ENCODE measurements at regions of chr1 and their contacts with region 1.

Region 1: DNA sequence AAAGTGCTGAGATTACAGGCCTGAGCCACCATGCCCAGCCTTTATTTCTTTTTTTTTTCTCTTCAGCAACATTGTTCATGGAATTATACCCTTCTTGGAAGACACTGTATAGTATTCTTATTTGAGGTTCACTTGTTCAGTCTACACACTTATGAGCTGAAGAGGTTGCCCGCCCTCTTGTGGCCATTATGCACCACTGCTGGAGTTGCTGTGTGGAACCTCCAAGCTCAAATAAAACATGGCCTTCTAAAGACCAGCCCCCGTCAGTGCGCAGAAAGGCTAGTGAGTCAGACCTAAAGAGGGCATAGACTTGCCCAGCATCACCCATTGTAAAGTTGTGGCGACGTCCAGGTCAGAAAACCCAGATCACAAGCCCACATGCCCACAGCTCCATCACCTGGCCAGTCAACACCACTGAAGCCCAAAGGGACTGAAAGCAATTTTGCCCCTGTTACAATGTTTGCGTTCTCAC is 20.4 kb downstream of the LURAP1 start:
- DNase-seq: peak; percentile 70
- H3K4me3 Mint-ChIP-seq: no peak overlapping the region
- H3K27ac Mint-ChIP-seq: no peak overlapping the region
- H3K4me1 Mint-ChIP-seq: peaks cover 3% of the 10 kb centered on the region
- H3K27me3 Mint-ChIP-seq: no peaks in the 10 kb centered on the region

Region 2: DNA sequence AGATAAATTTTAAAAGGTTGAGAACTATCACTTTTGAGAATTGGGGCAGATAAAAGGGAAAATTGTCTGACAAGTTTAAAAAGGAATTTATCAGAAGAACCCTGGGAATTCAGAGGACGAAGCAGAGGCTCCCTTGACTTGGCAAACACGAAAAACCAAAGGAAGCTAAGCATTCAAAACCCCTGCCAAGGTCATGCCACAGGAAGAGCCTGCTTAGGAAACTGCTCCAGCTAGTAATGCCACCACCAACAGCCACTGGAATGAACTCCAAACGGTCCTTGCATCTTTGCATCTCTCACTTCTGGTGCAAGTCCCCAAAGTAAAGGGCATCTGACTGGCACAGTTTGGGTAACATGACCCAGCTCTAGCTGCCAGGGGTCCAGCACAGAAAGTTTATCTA is 544.4 kb before region 1 on chr1:
- CTCF ChIA-PET with region 1: no interaction called
- POLR2A ChIA-PET with region 1: no interaction called
- DNase-seq: no peak
- H3K4me3 Mint-ChIP-seq: no peak overlapping the region
- H3K27ac Mint-ChIP-seq: no peak overlapping the region
- H3K4me1 Mint-ChIP-seq: peaks cover 34% of the 10 kb centered on the region
- H3K27me3 Mint-ChIP-seq: no peaks in the 10 kb centered on the region

Region 3: GRCh38 chr1:46036894-46037839 is 186.3 kb before region 1 on chr1:
- CTCF ChIA-PET with region 1: interaction called, 15 read pairs
- POLR2A ChIA-PET with region 1: no interaction called
- DNase-seq: peak; percentile 84
- H3K4me3 Mint-ChIP-seq: no peak overlapping the region
- H3K27ac Mint-ChIP-seq: no peak overlapping the region
- H3K4me1 Mint-ChIP-seq: no peaks in the 10 kb centered on the region
- H3K27me3 Mint-ChIP-seq: no peaks in the 10 kb centered on the region

Region 4: DNA sequence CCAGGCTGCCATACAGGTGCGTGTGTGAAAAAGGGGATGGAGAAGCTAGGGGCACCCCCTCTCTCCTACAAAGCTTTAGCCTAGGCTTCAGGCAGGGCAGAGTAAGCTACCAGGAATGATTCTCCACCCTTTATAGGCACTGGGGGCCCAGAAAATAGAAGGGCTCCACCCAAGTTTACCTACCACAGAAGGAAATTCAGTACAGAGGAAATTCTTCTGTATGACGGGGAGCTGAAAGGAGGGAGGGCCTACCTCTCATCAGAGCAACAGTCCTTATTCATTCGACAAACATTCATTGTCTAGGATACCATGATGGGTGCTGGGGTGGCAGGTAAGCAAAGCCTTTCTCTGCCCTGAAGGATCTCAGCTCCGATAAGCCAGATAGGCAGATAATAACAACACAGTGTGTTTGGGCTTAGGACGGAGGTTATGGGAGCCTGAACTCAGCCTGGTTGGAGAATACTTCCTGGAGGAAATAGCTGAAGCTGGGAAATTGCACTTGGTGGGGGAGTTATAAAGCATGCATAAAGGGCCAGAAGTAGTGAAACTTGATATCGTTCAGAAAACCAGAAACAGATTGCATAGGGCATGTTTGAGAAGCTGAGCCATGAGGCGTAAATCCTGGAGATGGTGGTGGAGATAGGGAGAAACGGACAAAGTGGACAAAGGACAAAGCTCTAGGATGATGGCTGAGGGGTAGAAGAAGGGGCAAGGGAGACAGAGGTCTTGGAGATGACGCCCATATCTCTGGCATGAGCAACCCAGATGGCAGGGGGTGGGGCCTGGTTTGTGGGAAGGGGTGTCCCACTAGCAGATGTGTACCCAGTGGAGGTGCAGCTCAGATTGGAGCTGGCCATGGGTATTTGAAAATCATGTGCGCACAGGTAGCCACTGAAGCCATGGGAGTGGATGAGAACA is 41.9 kb before region 1 on chr1:
- CTCF ChIA-PET with region 1: interaction called, 12 read pairs
- POLR2A ChIA-PET with region 1: no interaction called
- DNase-seq: no peak
- H3K4me3 Mint-ChIP-seq: no peak overlapping the region
- H3K27ac Mint-ChIP-seq: no peak overlapping the region
- H3K4me1 Mint-ChIP-seq: no peaks in the 10 kb centered on the region
- H3K27me3 Mint-ChIP-seq: no peaks in the 10 kb centered on the region

Region 5: DNA sequence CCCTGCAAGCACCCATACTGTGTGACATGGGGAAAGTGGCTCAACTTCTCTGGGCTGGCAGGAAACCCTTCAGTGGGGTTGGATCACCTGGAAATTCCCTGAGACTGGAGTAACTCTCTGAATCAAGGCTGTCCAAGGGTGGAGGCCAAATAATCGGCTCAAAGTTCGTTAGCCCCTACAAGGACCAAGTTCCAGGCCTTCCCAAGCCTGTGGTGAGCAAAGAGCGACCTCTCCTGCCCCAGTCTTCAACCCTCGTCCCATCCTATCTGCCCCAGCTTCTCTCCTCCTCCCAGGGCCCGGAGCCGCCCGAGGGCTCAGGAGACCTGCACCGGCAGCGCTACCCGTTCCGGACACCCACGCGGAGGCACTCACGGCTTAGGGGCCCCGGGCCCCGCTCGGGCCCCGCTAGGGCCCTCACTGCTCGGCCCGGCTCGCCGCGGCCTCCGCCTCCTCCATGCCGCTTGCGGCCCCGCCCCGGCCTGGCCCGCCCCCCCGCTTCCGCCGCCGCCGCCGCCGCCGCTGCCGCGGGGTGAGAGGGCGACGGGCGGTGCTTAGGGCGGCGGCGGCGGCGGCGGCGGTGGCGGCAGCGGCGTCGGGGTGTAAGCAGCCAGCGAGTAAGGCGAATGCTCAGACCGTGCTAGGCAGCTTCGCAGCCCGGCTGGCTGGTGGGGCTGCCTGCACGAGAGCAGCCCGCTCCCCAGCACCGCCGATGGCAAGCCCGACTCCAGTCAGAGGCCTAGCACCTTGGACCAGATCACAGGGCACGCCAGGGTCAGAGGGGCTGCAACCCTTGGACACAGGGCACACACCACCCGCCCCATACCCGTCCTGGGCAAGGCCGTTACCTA is 25.3 kb before region 1 on chr1 and contains the start of gene POMGNT1:
- CTCF ChIA-PET with region 1: interaction called, 20 read pairs
- POLR2A ChIA-PET with region 1: no interaction called
- DNase-seq: peak; percentile 85
- H3K4me3 Mint-ChIP-seq: peak within 1 kb of the TSS; percentile 78
- H3K27ac Mint-ChIP-seq: peak within 1 kb of the TSS; percentile 44
- H3K4me1 Mint-ChIP-seq: peaks cover 28% of the 10 kb centered on the region
- H3K27me3 Mint-ChIP-seq: peaks cover 2% of the 10 kb centered on the region
- total RNA-seq, gene POMGNT1: 27.4 to 28.5 TPM

Region 6: DNA sequence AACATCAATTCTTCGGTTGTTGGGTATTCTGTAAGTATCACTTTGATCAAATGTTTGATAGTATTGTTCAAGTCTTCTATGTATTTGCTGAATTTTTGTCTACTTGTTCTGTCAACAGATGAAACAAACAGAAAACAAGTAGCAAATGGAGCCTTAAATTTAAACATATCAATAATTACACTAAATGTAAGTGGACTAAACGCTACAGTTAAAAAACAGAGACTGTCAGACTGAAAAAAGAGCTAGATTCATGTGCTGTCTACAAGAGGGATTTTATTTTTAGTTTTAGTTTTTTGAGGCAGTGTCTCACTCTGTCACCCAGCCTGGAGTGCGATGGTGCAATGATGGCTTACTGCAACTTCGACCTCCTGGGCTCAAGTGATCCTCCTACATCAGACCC is 13.4 kb after region 1 on chr1:
- CTCF ChIA-PET with region 1: interaction called, 36 read pairs
- POLR2A ChIA-PET with region 1: no interaction called
- DNase-seq: no peak
- H3K4me3 Mint-ChIP-seq: no peak overlapping the region
- H3K27ac Mint-ChIP-seq: no peak overlapping the region
- H3K4me1 Mint-ChIP-seq: no peaks in the 10 kb centered on the region
- H3K27me3 Mint-ChIP-seq: peaks cover 1% of the 10 kb centered on the region

Region 7: DNA sequence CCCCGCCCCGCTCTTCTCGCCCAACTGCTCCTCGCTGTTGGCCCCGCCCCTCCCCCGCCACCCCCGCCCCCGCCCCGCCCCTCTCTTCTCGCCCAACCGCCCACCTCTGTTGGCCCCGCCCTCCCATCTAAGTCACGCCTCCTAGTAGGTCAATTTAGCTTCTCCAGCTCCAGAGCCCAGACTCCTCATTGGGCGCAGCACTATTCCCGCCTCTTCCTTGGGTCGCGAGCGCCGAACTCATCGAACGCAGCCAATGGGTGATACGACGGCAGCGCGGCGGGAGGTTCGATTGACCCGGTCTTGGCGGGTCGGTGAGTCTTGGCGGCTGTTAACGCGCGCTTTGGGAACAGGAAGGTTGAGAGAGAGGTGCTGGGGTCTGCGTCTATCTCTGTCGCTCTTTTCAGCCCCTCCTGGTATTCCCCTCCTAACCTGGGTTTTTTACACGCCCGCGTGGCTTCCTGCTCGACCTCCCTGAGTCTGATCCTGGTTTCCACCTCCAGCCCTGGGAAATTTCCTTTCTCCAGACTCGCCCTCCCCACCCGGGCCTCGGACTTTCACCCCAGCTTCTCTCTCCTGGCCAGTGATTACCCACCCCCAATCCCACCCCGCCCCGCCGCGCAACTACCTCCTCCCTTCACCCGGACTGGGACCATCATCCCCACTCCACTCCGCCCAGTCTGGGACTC is 24.1 kb after region 1 on chr1 and contains the start of gene RAD54L:
- CTCF ChIA-PET with region 1: interaction called, 23 read pairs
- POLR2A ChIA-PET with region 1: interaction called, 3 read pairs
- DNase-seq: peak; percentile 98
- H3K4me3 Mint-ChIP-seq: peak within 1 kb of the TSS; percentile 87
- H3K27ac Mint-ChIP-seq: peak within 1 kb of the TSS; percentile 83
- H3K4me1 Mint-ChIP-seq: peaks cover 47% of the 10 kb centered on the region
- H3K27me3 Mint-ChIP-seq: no peaks in the 10 kb centered on the region
- total RNA-seq, gene RAD54L: 43.9 to 44.0 TPM